Thyroid gland (tissue), 4 donors: ENCODE measurements at regions of chr3 and their contacts with region 1.

Region 1: DNA sequence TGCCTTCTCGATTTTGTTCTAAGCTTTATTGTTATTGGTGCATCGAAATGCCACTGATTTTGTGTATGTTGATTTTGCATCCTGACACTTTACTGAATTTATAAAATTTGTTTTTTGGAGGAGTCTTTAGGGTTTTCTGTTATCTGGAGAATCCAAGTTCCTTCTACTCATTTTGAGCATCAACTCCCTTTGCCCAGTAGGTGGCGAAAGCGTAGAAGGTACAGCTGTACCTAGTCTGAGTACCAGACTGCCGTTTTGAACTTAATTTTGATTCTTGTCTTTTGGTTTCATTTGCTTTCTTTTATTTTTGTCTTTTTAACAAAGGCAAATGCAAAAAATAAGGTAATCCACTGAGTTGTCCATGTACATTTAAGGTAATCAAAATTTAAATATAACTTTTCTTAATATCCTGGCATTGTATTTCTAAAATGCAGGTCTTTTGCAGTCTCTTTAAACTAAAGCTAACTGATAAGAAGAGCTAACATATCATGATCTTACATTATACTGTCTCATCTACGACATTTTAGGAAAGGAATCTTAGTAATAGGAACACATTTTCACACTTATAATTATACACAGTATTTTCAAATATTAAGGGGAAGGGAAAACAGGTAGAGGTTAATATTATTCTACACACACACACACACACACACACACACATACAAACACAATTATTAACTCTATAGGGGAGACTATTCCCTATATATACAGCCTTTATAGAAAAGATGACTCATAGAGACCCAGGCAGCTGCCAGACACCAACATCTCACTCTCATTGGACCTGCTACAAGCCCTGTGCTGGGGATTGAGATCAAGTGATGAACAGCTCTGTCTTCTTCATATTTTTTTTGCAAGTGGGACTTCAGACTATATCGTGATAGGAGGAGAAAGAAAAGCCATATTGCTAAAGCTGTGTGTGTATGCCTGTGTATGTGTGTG is 71.7 kb downstream of the SYNPR start:
- DNase-seq: peak; percentile 58 to 71
- H3K4me3 ChIP-seq: no peak overlapping the region
- H3K27ac ChIP-seq: no peak overlapping the region
- H3K4me1 ChIP-seq: no peaks in the 10 kb centered on the region
- H3K27me3 ChIP-seq: no peaks in the 10 kb centered on the region
- CTCF ChIP-seq: peak in 5 of 6 experiments; percentile 52 to 73 (median 65)
- POLR2A ChIP-seq: no peak

Region 2: DNA sequence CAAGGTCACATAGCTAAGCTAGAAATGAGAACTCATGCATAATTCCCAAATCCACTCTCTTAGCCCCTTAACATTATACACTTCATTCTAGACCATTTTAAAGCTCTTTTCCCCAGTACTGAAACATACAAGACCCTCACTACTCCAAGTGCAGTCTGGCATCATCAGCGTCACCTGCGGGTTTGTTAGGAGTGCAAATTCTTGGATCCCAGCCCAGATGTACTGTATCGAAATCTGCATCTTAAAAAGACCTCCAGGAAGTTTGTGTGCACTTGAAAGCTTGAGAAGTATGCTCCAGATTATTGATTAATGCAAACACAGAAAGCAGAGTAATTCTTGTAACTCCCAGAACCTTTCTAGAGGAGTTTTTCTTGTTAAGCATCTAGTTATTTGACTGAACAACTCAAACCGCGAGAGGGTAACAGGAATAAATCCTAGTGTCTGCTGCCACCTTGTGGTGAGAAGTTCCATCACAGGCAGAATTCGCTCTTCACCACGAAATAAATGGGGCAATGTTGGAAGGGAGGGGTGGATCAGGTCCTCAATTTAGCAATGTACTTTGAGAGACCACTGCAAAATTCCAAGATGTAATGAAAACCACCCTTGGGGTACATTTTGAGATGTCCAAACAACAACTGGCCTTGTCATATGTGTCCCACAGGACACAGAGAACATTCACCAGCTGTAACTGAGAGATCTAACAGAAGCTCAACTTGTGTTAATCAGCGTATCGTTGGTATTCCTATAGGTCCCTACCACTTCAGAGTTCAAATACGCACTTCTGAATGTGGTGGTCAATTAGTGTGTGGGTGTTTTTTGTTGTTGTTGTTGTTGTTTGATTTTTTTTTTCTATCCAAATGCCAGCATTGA is 468.7 kb after region 1 on chr3:
- intact Hi-C with region 1: loop called (anchors 5 kb)
- DNase-seq: peak; percentile 59 to 64
- H3K4me3 ChIP-seq: no peak overlapping the region
- H3K27ac ChIP-seq: no peak overlapping the region
- H3K4me1 ChIP-seq: no peaks in the 10 kb centered on the region
- H3K27me3 ChIP-seq: no peaks in the 10 kb centered on the region
- CTCF ChIP-seq: peak; percentile 64 to 90 (median 76)
- POLR2A ChIP-seq: no peak